ENCODE measurements at regions of chr4 and their contacts with region 1.

Region 1: GRCh38 chr4:95637043-95637600 is 88.3 kb upstream of the UNC5C start:
- DNase-seq: peak; percentile 51
- H3K4me3 Mint-ChIP-seq: no peak overlapping the region
- H3K27ac Mint-ChIP-seq: no peak overlapping the region
- H3K4me1 Mint-ChIP-seq: peaks cover 25% of the 10 kb centered on the region
- H3K27me3 Mint-ChIP-seq: no peaks in the 10 kb centered on the region
- CTCF ChIP-seq: peak; percentile 34

Region 2: GRCh38 chr4:95371476-95372224 is 265.5 kb before region 1 on chr4:
- CTCF ChIA-PET with region 1: no interaction called
- POLR2A ChIA-PET with region 1: no interaction called
- intact Hi-C with region 1: no loop called
- DNase-seq: no peak
- H3K4me3 Mint-ChIP-seq: no peak overlapping the region
- H3K27ac Mint-ChIP-seq: no peak overlapping the region
- H3K4me1 Mint-ChIP-seq: no peaks in the 10 kb centered on the region
- H3K27me3 Mint-ChIP-seq: no peaks in the 10 kb centered on the region
- CTCF ChIP-seq: no peak

Region 3: DNA sequence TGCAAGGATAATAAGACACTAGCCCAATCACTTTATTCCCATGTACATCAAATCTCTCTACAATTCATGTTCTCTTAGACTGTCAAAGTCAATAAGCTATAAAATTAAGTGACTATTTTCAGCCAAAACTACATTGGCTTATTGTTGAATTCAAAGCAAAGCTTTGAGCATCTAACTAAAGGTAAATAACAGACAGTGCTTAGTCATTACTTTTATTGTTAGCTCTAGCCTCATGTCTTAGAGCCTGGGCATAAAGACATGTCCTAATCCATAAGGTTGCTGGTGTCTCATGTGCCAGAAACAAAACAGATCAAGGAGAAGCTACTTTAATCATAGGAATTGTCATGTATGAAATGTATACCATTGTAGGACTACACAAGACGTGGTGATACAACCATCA is 14.8 kb after region 1 on chr4:
- CTCF ChIA-PET with region 1: interaction called, 13 read pairs
- POLR2A ChIA-PET with region 1: interaction called, 5 read pairs
- intact Hi-C with region 1: no loop called
- DNase-seq: no peak
- H3K4me3 Mint-ChIP-seq: no peak overlapping the region
- H3K27ac Mint-ChIP-seq: no peak overlapping the region
- H3K4me1 Mint-ChIP-seq: no peaks in the 10 kb centered on the region
- H3K27me3 Mint-ChIP-seq: no peaks in the 10 kb centered on the region
- CTCF ChIP-seq: no peak

Region 4: DNA sequence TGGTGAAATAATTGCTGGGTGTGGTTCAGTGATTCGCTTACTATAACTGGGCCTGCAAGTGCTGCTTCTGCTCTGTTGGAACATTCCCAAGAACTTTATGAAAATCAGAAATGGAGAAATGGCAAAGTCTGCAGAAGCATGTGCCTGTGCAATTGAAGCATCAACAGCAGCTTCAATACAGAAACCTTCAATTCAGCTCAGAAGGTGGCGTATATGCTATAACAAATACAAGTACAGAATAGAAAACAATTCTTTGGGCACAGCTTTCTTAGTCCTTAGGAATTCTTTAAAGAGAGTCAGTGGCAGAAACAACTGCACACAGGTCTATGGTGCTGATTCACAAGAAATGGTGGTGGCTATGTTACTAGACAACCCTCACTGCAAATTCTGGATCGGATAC is 184.7 kb after region 1 on chr4:
- CTCF ChIA-PET with region 1: no interaction called
- POLR2A ChIA-PET with region 1: no interaction called
- intact Hi-C with region 1: loop called (anchors 10 kb)
- DNase-seq: no peak
- H3K4me3 Mint-ChIP-seq: no peak overlapping the region
- H3K27ac Mint-ChIP-seq: no peak overlapping the region
- H3K4me1 Mint-ChIP-seq: peaks cover 7% of the 10 kb centered on the region
- H3K27me3 Mint-ChIP-seq: no peaks in the 10 kb centered on the region
- CTCF ChIP-seq: no peak